Spleen (tissue), 13 donors: ENCODE measurements at regions of chr19 and their contacts with region 1.

Region 1: GRCh38 chr19:4909897-4910593 is 744 bp downstream of the UHRF1 start:
- DNase-seq: peak; percentile 97
- H3K4me3 ChIP-seq: peak overlapping the region; percentile 62 to 94 (median 79)
- H3K27ac ChIP-seq: peak overlapping the region in 3 of 8 donors; percentile 63 to 76 (median 66)
- H3K4me1 ChIP-seq: peaks cover 33 to 71% (median 63%) of the 10 kb centered on the region in 6 donors
- H3K27me3 ChIP-seq: peaks cover 0 to 11% (median 6%) of the 10 kb centered on the region in 7 donors
- CTCF ChIP-seq: no peak
- POLR2A ChIP-seq: no peak

Region 2: DNA sequence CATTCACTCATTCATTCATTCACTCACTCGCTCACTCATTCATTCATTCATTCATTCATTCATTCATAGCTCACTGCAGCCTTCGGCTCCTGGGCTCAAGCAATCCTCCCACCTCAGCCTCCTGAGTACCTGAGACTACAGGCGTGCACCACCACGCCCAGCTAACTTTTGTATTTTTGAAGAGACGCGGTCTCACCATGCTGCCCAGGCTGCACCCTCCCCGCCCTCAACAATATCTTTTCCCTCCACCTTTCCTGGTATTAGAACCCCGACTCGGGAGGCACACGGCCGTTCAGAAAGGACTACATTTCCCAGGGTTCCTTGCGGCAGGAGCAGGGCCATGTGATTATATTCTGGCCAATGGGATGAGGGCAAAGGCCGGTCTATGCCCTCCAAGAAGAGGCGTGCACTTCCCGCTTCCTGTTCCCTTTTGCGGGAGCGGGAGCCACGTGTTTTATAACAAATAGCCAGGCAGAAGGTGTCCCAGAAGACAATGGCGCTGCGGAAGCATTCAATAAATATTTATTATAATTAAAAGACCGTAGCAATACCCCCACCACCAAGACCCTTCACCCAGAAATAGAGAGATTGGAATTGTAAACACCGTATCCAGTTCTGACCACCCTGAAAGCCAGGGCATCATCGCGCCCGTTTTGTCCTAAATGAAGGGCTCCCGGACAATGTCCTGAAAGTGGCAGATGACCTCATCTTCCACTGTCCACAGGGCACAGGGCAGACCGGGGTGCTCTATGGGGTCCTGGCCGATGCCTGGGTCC is 94.4 kb before region 1 on chr19:
- intact Hi-C with region 1: loop called (anchors 10 kb)
- DNase-seq: peak; percentile 91
- H3K4me3 ChIP-seq: peak overlapping the region in 6 of 8 donors; percentile 14 to 58 (median 25)
- H3K27ac ChIP-seq: peak overlapping the region in 5 of 8 donors; percentile 44 to 67 (median 61)
- H3K4me1 ChIP-seq: peaks cover 5 to 52% (median 23%) of the 10 kb centered on the region in 6 donors
- H3K27me3 ChIP-seq: no peaks in the 10 kb centered on the region
- CTCF ChIP-seq: peak in 1 of 11 experiments; percentile 7
- POLR2A ChIP-seq: no peak

Region 3: GRCh38 chr19:4870025-4870700 is 39.9 kb before region 1 on chr19:
- intact Hi-C with region 1: loop called (anchors 5 kb)
- DNase-seq: peak; percentile 76
- H3K4me3 ChIP-seq: no peak overlapping the region
- H3K27ac ChIP-seq: peak overlapping the region in 4 of 8 donors; percentile 32 to 97 (median 48)
- H3K4me1 ChIP-seq: peaks cover 0 to 64% (median 33%) of the 10 kb centered on the region in 6 donors
- H3K27me3 ChIP-seq: no peaks in the 10 kb centered on the region
- CTCF ChIP-seq: no peak
- POLR2A ChIP-seq: no peak

Region 4: GRCh38 chr19:5038631-5039271 is 128.7 kb after region 1 on chr19:
- intact Hi-C with region 1: no loop called
- DNase-seq: peak; percentile 74
- H3K4me3 ChIP-seq: no peak overlapping the region
- H3K27ac ChIP-seq: no peak overlapping the region
- H3K4me1 ChIP-seq: peaks cover 5 to 80% (median 43%) of the 10 kb centered on the region in 6 donors
- H3K27me3 ChIP-seq: no peaks in the 10 kb centered on the region
- CTCF ChIP-seq: peak in 10 of 11 experiments; percentile 17 to 74 (median 50)
- POLR2A ChIP-seq: no peak